PC-9 (cell line): ENCODE measurements at regions of chr1 and their contacts with region 1.

Region 1: DNA sequence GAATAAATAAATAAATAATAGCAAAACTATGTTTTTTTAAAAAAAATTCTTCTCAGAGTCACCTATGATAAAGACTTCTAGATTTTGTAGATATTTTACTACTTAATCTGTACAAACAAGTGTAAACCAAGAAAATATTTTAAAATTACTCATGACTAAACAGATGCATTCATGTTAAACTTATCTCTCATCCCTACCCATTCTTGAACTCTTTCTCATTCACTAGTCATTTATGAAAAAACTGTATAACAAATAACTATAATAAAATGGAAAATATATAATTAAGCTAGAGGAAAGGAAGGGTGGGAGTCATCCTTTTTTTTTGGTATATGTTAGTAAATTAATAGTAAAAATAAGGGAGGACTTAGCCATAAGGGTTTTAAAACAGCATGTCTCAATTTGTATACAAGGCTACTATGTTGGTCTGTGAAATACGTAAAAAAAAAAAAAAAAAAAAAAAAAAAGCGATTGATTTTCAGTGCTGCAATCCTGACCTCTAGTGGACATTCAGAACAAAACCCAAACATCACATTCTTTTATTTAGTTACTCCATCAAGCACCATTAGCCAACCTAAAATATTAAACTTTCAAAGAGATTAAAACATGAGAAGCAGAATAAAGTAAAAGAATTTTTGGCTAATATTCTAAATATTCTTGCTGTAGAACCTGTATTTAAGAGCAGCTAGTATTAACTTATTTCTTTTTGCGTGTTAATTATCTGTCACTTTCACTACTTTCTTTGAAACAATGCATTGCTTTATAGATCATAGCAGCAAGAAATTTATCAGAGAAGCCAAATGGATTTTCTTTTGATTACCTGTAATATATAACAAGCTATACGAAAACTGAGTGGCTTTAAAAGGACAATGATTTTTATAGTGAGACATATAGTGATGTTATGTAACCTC is 255.8 kb upstream of the CACYBP start:
- DNase-seq: peak in 1 of 2 experiments; percentile 52
- H3K4me3 ChIP-seq: no peak overlapping the region
- H3K27ac ChIP-seq: no peak overlapping the region
- H3K4me1 ChIP-seq: peaks cover 21% of the 10 kb centered on the region
- H3K27me3 ChIP-seq: no peaks in the 10 kb centered on the region
- CTCF ChIP-seq: peak; percentile 75

Region 2: GRCh38 chr1:173202430-173203145 is 1541.3 kb before region 1 on chr1:
- CTCF ChIA-PET with region 1: interaction called, 15 read pairs
- POLR2A ChIA-PET with region 1: no interaction called
- intact Hi-C with region 1: no loop called
- DNase-seq: peak in 1 of 2 experiments; percentile 33
- H3K4me3 ChIP-seq: no peak overlapping the region
- H3K27ac ChIP-seq: no peak overlapping the region
- H3K4me1 ChIP-seq: no peaks in the 10 kb centered on the region
- H3K27me3 ChIP-seq: no peaks in the 10 kb centered on the region
- CTCF ChIP-seq: peak; percentile 78

Region 3: GRCh38 chr1:173997796-173998195 is 746.1 kb before region 1 on chr1:
- CTCF ChIA-PET with region 1: interaction called, 11 read pairs
- POLR2A ChIA-PET with region 1: no interaction called
- intact Hi-C with region 1: no loop called
- DNase-seq: peak in 1 of 2 experiments; percentile 63
- H3K4me3 ChIP-seq: no peak overlapping the region
- H3K27ac ChIP-seq: peak overlapping the region; percentile 20; the same call in 1 of the 2 replicates
- H3K4me1 ChIP-seq: peaks cover 15% of the 10 kb centered on the region
- H3K27me3 ChIP-seq: no peaks in the 10 kb centered on the region
- CTCF ChIP-seq: no peak

Region 4: DNA sequence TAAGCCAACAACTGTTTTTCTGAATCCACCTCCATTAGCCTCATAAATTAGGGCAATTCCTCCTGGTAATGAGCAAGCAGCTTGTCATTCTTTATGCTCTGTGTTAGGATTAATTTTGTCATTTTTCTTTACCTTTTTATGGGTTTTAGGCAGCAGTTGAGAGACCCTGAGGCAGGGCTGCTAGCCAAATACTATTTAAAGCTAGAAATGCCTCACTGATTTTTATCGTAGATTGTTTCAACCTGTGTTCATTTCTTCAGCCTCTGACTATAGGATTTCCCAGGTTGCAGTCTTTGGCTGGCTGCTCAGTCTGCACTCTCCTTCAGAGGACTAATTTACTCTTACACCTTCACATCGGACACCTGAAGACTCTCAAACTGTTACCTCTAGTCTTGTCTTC is 646.5 kb before region 1 on chr1:
- CTCF ChIA-PET with region 1: interaction called, 3 read pairs
- POLR2A ChIA-PET with region 1: no interaction called
- intact Hi-C with region 1: loop called (anchors 5 kb)
- DNase-seq: no peak
- H3K4me3 ChIP-seq: no peak overlapping the region
- H3K27ac ChIP-seq: no peak overlapping the region
- H3K4me1 ChIP-seq: no peaks in the 10 kb centered on the region
- H3K27me3 ChIP-seq: no peaks in the 10 kb centered on the region
- CTCF ChIP-seq: no peak

Region 5: GRCh38 chr1:174262349-174263241 is 481.3 kb before region 1 on chr1:
- CTCF ChIA-PET with region 1: interaction called, 10 read pairs
- POLR2A ChIA-PET with region 1: no interaction called
- intact Hi-C with region 1: loop called (anchors 1 kb)
- DNase-seq: peak in 1 of 2 experiments; percentile 6
- H3K4me3 ChIP-seq: no peak overlapping the region
- H3K27ac ChIP-seq: no peak overlapping the region
- H3K4me1 ChIP-seq: no peaks in the 10 kb centered on the region
- H3K27me3 ChIP-seq: no peaks in the 10 kb centered on the region
- CTCF ChIP-seq: peak; percentile 84

Region 6: DNA sequence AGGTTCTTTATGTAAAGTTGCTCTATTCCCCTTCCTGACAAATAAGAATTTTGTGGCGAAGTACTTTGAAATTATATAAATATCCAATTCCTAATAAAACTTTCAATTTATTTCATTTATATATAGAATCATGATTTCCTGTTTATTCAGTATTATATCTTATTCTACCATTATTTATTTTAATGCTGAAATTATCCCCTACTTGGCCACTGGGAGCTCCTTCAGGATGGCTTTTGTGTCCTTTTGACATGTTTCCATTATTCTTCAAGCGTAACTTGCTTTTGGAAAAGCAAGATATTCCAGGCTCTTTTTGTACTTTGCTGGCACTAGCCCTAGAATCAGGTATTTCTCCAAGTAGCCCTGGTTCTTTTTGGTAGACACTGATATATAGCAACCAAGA is 188.7 kb after region 1 on chr1:
- CTCF ChIA-PET with region 1: no interaction called
- POLR2A ChIA-PET with region 1: no interaction called
- intact Hi-C with region 1: no loop called
- DNase-seq: no peak
- H3K4me3 ChIP-seq: no peak overlapping the region
- H3K27ac ChIP-seq: no peak overlapping the region
- H3K4me1 ChIP-seq: no peaks in the 10 kb centered on the region
- H3K27me3 ChIP-seq: no peaks in the 10 kb centered on the region
- CTCF ChIP-seq: no peak; the same call in 1 of the 2 replicates

Region 7: DNA sequence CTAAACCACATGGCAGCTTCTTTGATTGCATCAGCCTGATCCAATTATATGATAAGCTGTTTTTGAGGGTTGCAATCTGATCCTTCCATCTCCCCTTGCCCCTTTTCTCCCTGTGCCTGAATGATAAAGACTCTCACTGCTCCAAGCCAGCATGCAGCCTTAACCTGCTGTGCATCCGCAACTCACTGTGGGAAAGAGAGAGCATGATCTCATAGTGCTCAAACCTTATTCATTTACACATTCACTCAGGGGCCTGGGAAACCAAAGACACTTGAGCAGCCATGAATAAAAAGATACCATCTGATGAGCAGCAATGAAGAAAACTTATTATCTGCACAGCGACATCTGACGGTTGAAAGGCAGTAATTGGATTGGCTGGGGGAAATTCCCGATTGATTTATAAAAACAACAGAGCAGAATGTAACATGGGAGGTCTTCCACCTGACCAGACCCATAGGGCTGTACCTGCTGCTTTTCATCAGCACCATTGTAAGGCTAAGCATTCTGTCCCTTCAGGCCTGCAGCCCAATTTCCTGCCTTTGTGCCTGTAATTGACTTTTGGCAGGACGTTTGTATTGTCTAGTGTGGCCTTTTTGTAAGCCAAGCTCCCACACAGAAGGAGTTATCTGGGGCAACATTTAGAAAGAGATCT is 386.2 kb after region 1 on chr1:
- CTCF ChIA-PET with region 1: no interaction called
- POLR2A ChIA-PET with region 1: no interaction called
- intact Hi-C with region 1: loop called (anchors 10 kb)
- DNase-seq: no peak
- H3K4me3 ChIP-seq: no peak overlapping the region
- H3K27ac ChIP-seq: no peak overlapping the region
- H3K4me1 ChIP-seq: no peaks in the 10 kb centered on the region
- H3K27me3 ChIP-seq: no peaks in the 10 kb centered on the region; the same call in 1 of the 2 replicates
- CTCF ChIP-seq: no peak

Region 8: DNA sequence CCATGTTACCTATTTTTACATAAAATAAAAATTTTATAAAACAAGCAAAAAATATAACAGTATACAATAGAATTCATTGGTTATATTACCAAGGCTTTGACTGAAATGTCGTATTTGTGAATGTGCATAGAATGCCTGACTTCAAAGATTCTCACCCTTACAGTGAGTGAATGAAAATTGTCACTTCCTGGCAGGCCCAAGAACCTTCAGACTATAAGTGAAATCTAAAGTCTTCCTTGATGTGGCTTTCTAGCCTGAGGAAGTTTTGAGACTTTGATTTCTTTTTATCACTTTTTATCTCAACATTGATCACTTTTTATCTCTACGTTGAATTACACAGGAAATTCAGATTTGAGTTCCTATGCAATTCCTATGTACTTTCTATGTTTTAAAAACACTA is 553.4 kb after region 1 on chr1:
- CTCF ChIA-PET with region 1: no interaction called
- POLR2A ChIA-PET with region 1: no interaction called
- intact Hi-C with region 1: no loop called
- DNase-seq: no peak
- H3K4me3 ChIP-seq: no peak overlapping the region
- H3K27ac ChIP-seq: no peak overlapping the region
- H3K4me1 ChIP-seq: no peaks in the 10 kb centered on the region
- H3K27me3 ChIP-seq: no peaks in the 10 kb centered on the region
- CTCF ChIP-seq: no peak